Body of pancreas (tissue), 4 donors: ENCODE measurements at regions of chr5 and their contacts with region 1.

Region 1: DNA sequence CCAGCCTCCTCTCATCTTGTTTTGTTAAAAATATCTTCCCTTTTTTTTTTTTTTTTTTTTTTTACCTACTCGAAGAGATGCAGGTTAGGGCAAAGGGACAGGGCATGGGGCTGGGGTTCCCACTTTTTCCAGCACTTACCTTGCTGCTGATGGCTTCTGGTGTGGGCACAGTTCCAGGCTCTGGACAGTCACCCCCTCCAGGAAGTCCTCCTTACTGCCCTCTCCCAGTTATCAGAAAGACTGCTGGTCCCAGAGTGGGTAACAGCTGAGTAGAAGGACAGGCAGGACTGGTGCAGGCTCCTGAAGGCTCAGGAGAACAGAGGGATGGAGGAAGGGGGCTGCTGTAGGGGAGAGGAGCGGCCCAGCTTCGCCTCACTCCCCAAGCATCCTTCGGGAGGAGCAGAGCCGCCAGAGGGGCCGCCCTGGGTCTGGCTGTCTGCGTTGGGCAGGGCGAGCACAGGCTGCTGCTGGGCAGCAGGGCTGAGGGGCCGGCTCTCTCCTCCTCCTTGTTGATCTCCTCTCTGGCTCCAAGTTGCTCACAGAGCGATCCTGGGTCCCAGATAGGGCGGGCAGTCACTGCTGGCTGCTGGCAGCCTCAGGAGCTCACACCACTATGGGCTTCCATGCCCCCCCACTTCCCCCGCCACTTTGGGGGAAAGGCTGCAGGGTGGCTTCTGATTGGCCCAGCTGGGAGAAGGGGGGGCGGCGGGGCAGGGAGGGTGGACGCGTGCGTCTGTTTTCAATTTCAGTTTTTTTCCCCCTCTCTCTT is at the start of gene PDGFRB:
- DNase-seq: peak; percentile 48 to 63 (median 54)
- ATAC-seq: peak; percentile 56
- H3K4me3 ChIP-seq: no peak within 1 kb of the TSS
- H3K27ac ChIP-seq: peak within 1 kb of the TSS in 2 of 4 donors; percentile 40 to 44
- H3K4me1 ChIP-seq: no peaks in the 10 kb centered on the region
- H3K27me3 ChIP-seq: no peaks in the 10 kb centered on the region
- CTCF ChIP-seq: no peak
- POLR2A ChIP-seq: peak in 2 of 3 donors; percentile 45 to 49
- total RNA-seq, gene PDGFRB: 24.1 to 34.2 TPM

Region 2: GRCh38 chr5:150001678-150002493 is 153.6 kb before region 1 on chr5:
- intact Hi-C with region 1: no loop called
- DNase-seq: peak; percentile 35 to 55 (median 46)
- ATAC-seq: peak; percentile 39
- H3K4me3 ChIP-seq: peak overlapping the region in 1 of 2 donors; percentile 71
- H3K27ac ChIP-seq: peak overlapping the region in 3 of 4 donors; percentile 85 to 93 (median 86)
- H3K4me1 ChIP-seq: peaks cover 36% of the 10 kb centered on the region
- H3K27me3 ChIP-seq: no peaks in the 10 kb centered on the region
- CTCF ChIP-seq: peak; percentile 9 to 68 (median 49)
- POLR2A ChIP-seq: no peak

Region 3: DNA sequence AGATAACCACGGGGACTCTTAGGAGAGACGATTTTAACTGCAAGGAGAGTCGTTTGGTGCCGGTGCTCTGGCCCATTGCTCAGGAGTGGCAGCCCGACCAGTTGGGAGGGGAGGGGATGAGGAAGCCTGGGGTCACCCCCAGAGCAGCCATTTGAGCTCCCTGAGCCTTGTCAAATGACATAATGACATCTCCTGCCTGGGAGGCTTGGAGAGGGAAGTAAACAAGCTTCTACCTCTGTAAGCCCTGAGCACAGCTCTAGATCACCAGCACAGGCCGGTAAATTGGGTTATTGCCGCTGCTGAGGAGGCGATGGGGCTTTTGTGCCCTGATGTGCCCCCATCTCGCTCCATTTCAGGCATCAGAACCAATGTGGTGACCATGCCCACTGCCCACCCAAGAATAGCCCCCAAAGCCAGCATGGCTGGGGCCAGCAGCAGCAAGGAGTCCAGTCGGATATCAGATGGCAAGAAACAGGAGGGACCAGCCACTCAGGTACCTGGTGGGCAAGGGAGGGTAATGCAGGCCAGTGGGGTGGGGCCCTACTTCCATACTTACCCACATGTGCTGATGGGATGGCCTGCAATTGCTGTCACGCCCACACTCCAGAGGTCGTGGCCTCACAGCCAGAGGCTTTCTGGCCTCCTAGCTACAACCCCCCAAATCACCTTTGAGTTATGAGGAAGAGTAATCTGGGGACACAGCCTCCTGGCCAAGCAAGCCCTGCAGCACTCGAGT is 234.3 kb after region 1 on chr5:
- intact Hi-C with region 1: no loop called
- DNase-seq: no peak
- ATAC-seq: no peak
- H3K4me3 ChIP-seq: no peak overlapping the region
- H3K27ac ChIP-seq: no peak overlapping the region
- H3K4me1 ChIP-seq: no peaks in the 10 kb centered on the region
- H3K27me3 ChIP-seq: no peaks in the 10 kb centered on the region
- CTCF ChIP-seq: no peak
- POLR2A ChIP-seq: no peak

Region 4: GRCh38 chr5:150436141-150436680 is 280.8 kb after region 1 on chr5:
- intact Hi-C with region 1: loop called (anchors 10 kb)
- DNase-seq: peak; percentile 91 to 95 (median 92)
- ATAC-seq: peak; percentile 94
- H3K4me3 ChIP-seq: no peak overlapping the region
- H3K27ac ChIP-seq: no peak overlapping the region
- H3K4me1 ChIP-seq: no peaks in the 10 kb centered on the region
- H3K27me3 ChIP-seq: no peaks in the 10 kb centered on the region
- CTCF ChIP-seq: peak; percentile 71 to 86 (median 81)
- POLR2A ChIP-seq: no peak